SK-N-SH (cell line): ENCODE measurements at regions of chr3 and their contacts with region 1.

Region 1: GRCh38 chr3:53709860-53710674 is 136.2 kb downstream of the CHDH start:
- DNase-seq: peak; percentile 86
- H3K4me3 ChIP-seq: no peak overlapping the region; a peak in 1 of 4 replicates
- H3K27ac ChIP-seq: no peak overlapping the region
- H3K4me1 ChIP-seq: peaks cover 0 to 46% of the 10 kb centered on the region in 2 experiments; a peak in 1 of 4 replicates
- H3K27me3 ChIP-seq: no peaks in the 10 kb centered on the region; the same call in none of the 2 replicates
- CTCF ChIP-seq: peak; percentile 80
- EP300 ChIP-seq: no peak
- RAD21 ChIP-seq: peak; percentile 94

Region 2: DNA sequence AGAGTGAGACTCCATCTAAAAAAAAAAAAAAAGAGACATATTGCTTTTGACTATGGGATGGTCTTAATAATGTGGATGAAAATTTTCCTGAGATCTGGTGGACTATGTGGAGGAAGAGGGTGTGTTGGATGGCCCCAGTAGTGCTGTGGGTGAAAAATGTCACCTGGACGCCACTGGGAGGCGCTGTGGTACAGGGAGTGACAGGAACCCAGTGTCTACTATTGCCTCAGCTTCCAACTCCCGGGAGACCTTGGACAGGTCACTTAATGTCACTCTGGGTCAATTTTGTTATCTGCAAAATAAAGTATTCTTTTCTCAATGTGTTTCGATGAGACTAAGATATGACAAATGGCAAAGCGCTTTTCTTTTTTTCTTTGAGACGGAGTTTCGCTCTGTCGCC is 335.0 kb before region 1 on chr3:
- CTCF ChIA-PET with region 1: interaction called, 149 read pairs
- POLR2A ChIA-PET with region 1: no interaction called
- DNase-seq: peak; percentile 82
- H3K4me3 ChIP-seq: peak overlapping the region in 1 of 2 experiments; percentile 29; a peak in 1 of 4 replicates
- H3K27ac ChIP-seq: no peak overlapping the region
- H3K4me1 ChIP-seq: no peaks in the 10 kb centered on the region
- H3K27me3 ChIP-seq: no peaks in the 10 kb centered on the region
- CTCF ChIP-seq: peak; percentile 76
- EP300 ChIP-seq: no peak
- RAD21 ChIP-seq: peak; percentile 99

Region 3: DNA sequence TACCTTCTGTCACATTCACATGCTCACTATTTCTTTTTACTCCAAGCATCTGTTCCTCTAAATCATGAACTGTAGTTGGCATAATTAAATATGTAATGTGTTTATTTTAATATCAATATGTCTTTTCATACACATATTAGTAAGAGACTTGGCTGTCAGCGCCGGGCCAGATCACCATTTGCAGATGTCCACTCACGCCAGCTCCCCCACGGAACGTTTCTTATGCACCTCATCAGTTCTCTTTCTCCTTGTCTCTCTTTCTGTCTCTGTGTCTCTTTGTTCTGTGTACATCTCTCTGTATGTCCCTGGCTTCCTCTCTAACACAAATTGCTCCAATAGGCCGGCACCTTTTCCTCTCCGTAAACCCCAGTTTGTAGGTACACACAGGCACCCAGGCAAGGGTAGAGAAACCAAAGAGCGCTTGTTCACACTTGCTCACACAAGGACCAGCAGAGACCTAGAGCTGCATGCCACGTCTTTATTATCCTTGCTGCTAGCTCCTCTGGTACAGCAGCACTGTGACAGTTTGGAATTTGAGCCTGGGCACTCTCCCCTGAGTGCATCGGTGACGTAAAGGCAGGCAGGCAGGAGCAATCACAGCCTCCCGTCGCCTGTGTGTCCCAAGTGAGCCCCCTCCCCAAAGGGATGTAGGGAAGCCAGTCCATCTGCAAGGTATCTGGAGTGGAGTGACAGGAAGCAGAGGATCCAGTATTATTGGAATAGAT is 175.2 kb before region 1 on chr3:
- CTCF ChIA-PET with region 1: interaction called, 25 read pairs
- POLR2A ChIA-PET with region 1: no interaction called
- DNase-seq: peak; percentile 59
- H3K4me3 ChIP-seq: no peak overlapping the region
- H3K27ac ChIP-seq: peak overlapping the region in 1 of 2 experiments; percentile 90; a peak in 2 of 4 replicates
- H3K4me1 ChIP-seq: peaks cover 0 to 43% of the 10 kb centered on the region in 2 experiments; a peak in 2 of 4 replicates
- H3K27me3 ChIP-seq: no peaks in the 10 kb centered on the region
- CTCF ChIP-seq: no peak
- EP300 ChIP-seq: peak in 1 of 2 experiments; percentile 37; a peak in 1 of 4 replicates
- RAD21 ChIP-seq: no peak

Region 4: GRCh38 chr3:53677413-53677812 is 32.7 kb before region 1 on chr3:
- CTCF ChIA-PET with region 1: interaction called, 70 read pairs
- POLR2A ChIA-PET with region 1: no interaction called
- DNase-seq: peak; percentile 40
- H3K4me3 ChIP-seq: no peak overlapping the region
- H3K27ac ChIP-seq: no peak overlapping the region
- H3K4me1 ChIP-seq: peaks cover 0 to 41% of the 10 kb centered on the region in 2 experiments; a peak in 2 of 4 replicates
- H3K27me3 ChIP-seq: no peaks in the 10 kb centered on the region; the same call in 1 of the 2 replicates
- CTCF ChIP-seq: peak; percentile 33; the same call in 1 of the 2 replicates
- EP300 ChIP-seq: no peak
- RAD21 ChIP-seq: peak; percentile 62

Region 5: GRCh38 chr3:53696401-53697150 is 13.5 kb before region 1 on chr3:
- CTCF ChIA-PET with region 1: interaction called, 45 read pairs
- POLR2A ChIA-PET with region 1: no interaction called
- DNase-seq: no peak
- H3K4me3 ChIP-seq: no peak overlapping the region
- H3K27ac ChIP-seq: no peak overlapping the region
- H3K4me1 ChIP-seq: no peaks in the 10 kb centered on the region
- H3K27me3 ChIP-seq: no peaks in the 10 kb centered on the region
- CTCF ChIP-seq: no peak
- EP300 ChIP-seq: no peak
- RAD21 ChIP-seq: no peak

Region 6: GRCh38 chr3:53812434-53812833 is 102.4 kb after region 1 on chr3:
- CTCF ChIA-PET with region 1: no interaction called
- POLR2A ChIA-PET with region 1: no interaction called
- DNase-seq: no peak
- H3K4me3 ChIP-seq: no peak overlapping the region
- H3K27ac ChIP-seq: no peak overlapping the region
- H3K4me1 ChIP-seq: peaks cover 0 to 4% of the 10 kb centered on the region in 2 experiments; a peak in 1 of 4 replicates
- H3K27me3 ChIP-seq: no peaks in the 10 kb centered on the region
- CTCF ChIP-seq: no peak
- EP300 ChIP-seq: no peak
- RAD21 ChIP-seq: no peak

Region 7: DNA sequence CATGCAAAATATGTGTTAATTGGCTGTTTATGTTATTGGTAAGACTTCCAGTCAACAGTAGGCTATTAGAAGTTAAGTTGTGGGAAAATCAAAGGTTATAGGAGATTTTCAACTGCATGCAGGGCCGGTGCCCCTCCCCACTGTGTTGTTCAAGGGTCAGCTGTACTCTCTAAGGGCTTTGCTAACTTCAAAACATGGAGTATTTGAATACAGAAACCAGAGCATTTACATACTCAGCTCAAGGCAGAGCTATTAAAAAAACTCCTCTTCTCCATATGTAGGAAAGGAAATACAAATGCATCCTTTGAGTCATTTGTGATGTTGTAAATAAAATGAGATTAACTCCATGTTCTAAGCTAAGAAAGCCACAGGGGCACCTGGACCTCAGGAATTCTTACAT is 153.1 kb after region 1 on chr3:
- CTCF ChIA-PET with region 1: no interaction called
- POLR2A ChIA-PET with region 1: no interaction called
- DNase-seq: no peak
- H3K4me3 ChIP-seq: no peak overlapping the region
- H3K27ac ChIP-seq: no peak overlapping the region
- H3K4me1 ChIP-seq: no peaks in the 10 kb centered on the region
- H3K27me3 ChIP-seq: no peaks in the 10 kb centered on the region
- CTCF ChIP-seq: no peak
- EP300 ChIP-seq: no peak
- RAD21 ChIP-seq: no peak